Caki2 (cell line): ENCODE measurements at regions of chr7 and their contacts with region 1.

Region 1: GRCh38 chr7:81447351-81447952 is 322.4 kb downstream of the HGF start:
- DNase-seq: peak; percentile 45

Region 2: DNA sequence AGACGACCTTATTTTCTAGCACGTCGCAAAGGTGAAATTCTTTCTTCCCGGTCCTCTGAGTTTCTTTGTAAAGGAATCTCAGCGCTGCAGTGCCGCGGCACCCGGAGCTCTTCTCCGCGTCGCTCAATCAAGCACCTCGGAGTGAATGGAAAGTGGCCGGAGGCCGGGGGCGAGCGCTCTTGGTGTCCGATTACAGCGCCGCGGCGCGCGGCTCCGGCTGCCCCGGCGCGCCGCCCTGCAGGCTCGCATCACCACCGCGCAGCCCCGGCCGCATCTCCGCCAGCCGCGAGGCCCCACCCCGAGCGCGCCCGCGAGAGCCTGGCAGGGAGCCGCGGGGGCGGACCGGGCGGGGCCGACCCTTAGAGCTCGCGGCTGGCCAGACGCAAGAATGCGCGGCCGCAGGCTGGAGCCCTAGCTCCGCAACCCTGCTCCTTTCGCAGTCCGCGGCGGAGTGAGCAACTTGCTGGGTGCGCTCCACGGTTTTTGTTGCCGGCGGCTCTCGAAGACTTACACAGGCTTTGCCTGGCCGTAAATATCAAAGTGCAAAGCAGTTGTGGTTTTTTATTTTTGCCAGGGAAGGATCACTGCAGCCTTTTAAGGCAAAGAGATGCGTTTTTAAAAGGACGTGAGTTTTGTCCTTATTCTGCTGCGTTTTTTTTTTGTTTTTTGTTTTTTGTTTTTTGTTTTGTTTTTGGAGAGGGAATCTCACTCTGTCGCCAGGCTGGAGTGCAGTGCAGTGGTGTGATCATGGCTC is 528.4 kb before region 1 on chr7 and contains the start of gene SEMA3C:
- in situ Hi-C with region 1: loop called (anchors 25 kb)
- DNase-seq: peak; percentile 92
- total RNA-seq, gene SEMA3C: 49.8 and 69.8 TPM in 2 replicates

Region 3: GRCh38 chr7:81383848-81384247 is 63.6 kb before region 1 on chr7:
- in situ Hi-C with region 1: no loop called
- DNase-seq: no peak